ENCODE measurements at regions of chr2 and their contacts with region 1.

Region 1: DNA sequence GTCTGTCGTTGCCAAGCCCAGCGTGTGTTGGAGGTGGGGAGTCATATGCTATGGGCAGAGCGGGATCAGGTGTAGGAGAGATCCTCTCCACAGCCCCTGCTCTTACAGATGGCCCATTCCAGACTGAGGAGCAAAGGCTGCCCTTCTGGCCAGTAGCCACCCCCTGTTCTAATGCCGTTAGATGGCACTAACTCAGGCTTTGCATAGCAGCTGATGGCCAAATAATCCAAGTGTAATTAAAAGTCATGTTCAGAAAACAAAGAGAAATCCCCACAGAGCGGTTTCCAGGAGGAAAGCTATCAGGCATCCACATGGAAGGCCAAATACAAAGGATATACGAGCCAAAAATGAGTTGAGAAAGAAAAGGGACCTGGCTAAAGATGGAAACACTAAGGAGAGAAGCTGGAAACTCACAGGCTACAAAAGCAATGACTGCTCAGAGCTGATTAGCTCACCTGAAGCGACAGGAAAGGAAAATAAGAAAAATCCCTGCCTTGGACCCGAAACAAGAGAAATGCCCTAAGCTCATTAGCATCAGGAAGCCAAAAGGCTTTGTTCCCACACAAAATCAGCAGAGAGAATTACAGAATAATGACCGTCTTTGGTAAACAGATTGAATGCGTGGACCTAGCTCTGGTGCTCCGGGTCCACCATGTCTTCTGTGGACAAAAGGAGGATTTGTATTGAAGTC is 1002.4 kb upstream of the KLHL29 start:
- DNase-seq: no peak
- H3K4me3 ChIP-seq: no peak overlapping the region
- H3K27ac ChIP-seq: no peak overlapping the region
- H3K4me1 ChIP-seq: no peaks in the 10 kb centered on the region
- H3K27me3 ChIP-seq: no peaks in the 10 kb centered on the region
- CTCF ChIP-seq: no peak
- EP300 ChIP-seq: no peak
- POLR2A ChIP-seq: no peak

Region 2: GRCh38 chr2:21727101-21727500 is 655.5 kb before region 1 on chr2:
- intact Hi-C with region 1: loop called (anchors 5 kb)
- DNase-seq: no peak
- H3K4me3 ChIP-seq: no peak overlapping the region
- H3K27ac ChIP-seq: no peak overlapping the region
- H3K4me1 ChIP-seq: no peaks in the 10 kb centered on the region
- H3K27me3 ChIP-seq: no peaks in the 10 kb centered on the region
- CTCF ChIP-seq: no peak
- EP300 ChIP-seq: no peak
- POLR2A ChIP-seq: no peak

Measured in esophagus muscularis mucosa (tissue), 4 donors.